Uterus (tissue), 4 donors: ENCODE measurements at regions of chr17 and their contacts with region 1.

Region 1: GRCh38 chr17:44331249-44331760 is 6.7 kb upstream of the SLC25A39 start:
- DNase-seq: peak; percentile 58 to 72
- H3K4me3 ChIP-seq: no peak overlapping the region
- H3K27ac ChIP-seq: no peak overlapping the region
- H3K4me1 ChIP-seq: peaks cover 0 to 1% of the 10 kb centered on the region in 2 donors
- H3K27me3 ChIP-seq: no peaks in the 10 kb centered on the region
- CTCF ChIP-seq: peak; percentile 75 to 82 (median 78)
- POLR2A ChIP-seq: no peak

Region 2: DNA sequence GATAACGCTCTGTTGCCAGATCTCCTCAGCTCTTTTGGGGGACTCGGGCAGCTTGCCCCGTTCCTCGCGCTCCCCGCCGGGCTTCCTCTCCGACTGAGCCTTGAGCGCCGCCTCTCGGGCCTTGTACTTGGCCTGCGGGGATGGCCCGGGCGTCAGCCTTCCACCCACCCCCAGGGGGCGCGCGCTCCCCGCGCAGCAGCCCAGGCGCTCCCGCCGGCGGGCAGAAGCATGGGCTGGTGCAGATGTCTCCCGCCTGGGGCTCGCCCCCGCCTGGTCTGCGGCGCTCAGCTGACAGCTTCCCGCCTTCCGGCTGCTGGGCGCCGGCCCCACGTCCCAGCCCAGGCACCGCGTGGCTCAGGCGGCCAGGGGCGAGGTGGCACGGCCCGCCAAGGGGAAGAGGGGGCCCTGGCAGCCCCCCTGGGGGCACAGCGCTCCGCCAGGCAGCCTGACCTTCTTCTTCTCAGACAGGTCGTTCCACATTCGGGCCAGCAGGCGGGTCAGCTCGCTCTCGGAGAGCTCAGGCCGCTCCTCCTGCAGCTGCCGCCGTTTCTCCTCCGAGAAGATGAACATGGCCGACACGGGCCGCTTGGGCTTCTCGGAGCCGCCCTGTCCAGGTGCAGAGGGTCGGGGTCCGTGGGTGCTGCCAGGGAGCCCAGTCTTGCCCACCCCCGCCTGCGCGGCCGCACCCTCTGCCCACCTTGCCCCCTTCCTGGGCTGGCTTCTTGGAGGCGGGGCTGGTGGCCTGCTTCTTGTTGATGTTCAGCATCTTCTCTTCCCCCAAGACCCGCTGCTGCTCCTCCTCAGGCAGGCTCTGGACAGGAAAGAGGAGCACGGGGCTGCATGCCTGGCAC is 120.7 kb before region 1 on chr17:
- intact Hi-C with region 1: loop called (anchors 5 kb)
- DNase-seq: peak; percentile 84 to 89
- H3K4me3 ChIP-seq: no peak overlapping the region
- H3K27ac ChIP-seq: peak overlapping the region; percentile 51 to 65
- H3K4me1 ChIP-seq: peaks cover 0 to 14% of the 10 kb centered on the region in 2 donors
- H3K27me3 ChIP-seq: no peaks in the 10 kb centered on the region
- CTCF ChIP-seq: peak; percentile 97 to 100 (median 99)
- POLR2A ChIP-seq: peak; percentile 43 to 45

Region 3: GRCh38 chr17:44385287-44386181 is 54.2 kb after region 1 on chr17:
- intact Hi-C with region 1: no loop called
- DNase-seq: peak; percentile 89
- H3K4me3 ChIP-seq: peak overlapping the region; percentile 35 to 45
- H3K27ac ChIP-seq: peak overlapping the region; percentile 23 to 69
- H3K4me1 ChIP-seq: no peaks in the 10 kb centered on the region
- H3K27me3 ChIP-seq: no peaks in the 10 kb centered on the region
- CTCF ChIP-seq: peak in 1 of 4 experiments; percentile 0
- POLR2A ChIP-seq: peak; percentile 28 to 68